ENCODE measurements at regions of chr12 and their contacts with region 1.

Region 1: DNA sequence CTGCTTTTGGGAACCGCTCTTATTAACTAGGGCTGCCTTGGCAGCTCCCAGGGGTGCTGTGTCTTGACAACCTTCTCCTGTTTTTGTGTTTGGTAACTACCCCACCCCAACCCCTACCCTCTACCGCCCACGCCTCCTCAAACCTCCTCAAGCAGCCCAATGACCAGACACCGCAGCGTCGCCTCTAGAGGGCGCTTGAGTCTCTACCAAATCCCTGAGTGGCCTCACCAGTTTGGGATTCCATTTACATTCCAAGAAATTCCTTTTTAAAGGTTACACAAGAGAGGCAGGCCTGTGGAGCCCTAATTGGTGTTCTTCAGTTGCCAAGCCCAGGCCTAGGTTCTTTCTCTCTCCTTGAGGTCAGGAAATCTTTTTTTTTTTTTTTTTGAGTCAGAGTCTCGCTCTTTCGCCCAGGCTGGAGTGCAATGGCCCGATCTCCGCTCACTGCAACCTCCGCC is 72.3 kb upstream of the USP44 start:
- DNase-seq: peak; percentile 78
- H3K4me3 ChIP-seq: no peak overlapping the region
- H3K4me3 Mint-ChIP-seq: no peak overlapping the region
- H3K27ac Mint-ChIP-seq: peak overlapping the region; percentile 53
- H3K4me1 ChIP-seq: peaks cover 13% of the 10 kb centered on the region; the same call in 1 of the 2 replicates
- H3K4me1 Mint-ChIP-seq: no peaks in the 10 kb centered on the region
- H3K27me3 ChIP-seq: no peaks in the 10 kb centered on the region
- H3K27me3 Mint-ChIP-seq: no peaks in the 10 kb centered on the region
- CTCF ChIP-seq: peak; percentile 61 to 76

Region 2: DNA sequence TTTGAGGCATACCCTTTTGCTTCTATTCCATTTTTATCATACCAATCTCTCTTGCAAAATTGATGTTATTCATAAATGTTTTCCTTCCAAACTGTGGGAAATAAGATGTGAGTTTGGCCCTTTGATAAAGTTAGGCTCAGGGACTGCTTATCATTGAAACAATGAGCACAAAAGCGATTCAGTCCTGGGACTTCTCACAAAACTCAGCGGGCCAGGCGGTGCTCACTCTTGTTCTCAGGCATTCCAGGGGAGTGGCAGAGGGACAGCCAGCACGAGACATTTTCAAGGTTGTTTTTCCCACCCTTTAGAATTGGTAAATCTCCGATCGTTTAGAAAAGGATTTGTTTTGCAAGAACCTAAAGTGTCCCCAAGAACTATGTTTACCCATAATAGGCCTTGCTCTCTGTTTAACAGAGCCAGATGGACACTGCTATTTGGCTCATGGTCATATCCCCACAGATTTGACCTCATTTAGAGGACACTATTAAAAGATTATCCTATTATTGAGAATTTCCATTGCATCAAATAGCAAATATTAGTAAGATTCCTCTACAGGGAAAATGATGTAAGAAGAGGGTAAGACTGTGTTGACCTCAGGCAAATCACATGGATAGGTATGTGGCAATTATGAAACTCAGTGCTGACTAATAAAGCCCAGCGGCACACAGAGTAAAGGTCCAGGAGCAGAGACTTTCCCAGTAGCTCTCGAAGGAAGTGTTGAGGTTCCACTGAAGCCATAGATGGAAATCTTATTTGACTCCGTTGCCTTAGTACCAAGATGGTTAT is 30.3 kb after region 1 on chr12:
- CTCF ChIA-PET with region 1: no interaction called
- POLR2A ChIA-PET with region 1: no interaction called
- intact Hi-C with region 1: loop called (anchors 2 kb)
- DNase-seq: peak; percentile 40 to 76
- H3K4me3 ChIP-seq: no peak overlapping the region
- H3K4me3 Mint-ChIP-seq: peak overlapping the region; percentile 10
- H3K27ac Mint-ChIP-seq: peak overlapping the region; percentile 23
- H3K4me1 ChIP-seq: peaks cover 15% of the 10 kb centered on the region
- H3K4me1 Mint-ChIP-seq: peaks cover 33% of the 10 kb centered on the region
- H3K27me3 ChIP-seq: no peaks in the 10 kb centered on the region
- H3K27me3 Mint-ChIP-seq: no peaks in the 10 kb centered on the region
- CTCF ChIP-seq: no peak

Region 3: GRCh38 chr12:95721350-95721749 is 97.7 kb after region 1 on chr12:
- CTCF ChIA-PET with region 1: interaction called, 5 read pairs
- POLR2A ChIA-PET with region 1: no interaction called
- intact Hi-C with region 1: loop called (anchors 1 kb)
- DNase-seq: peak in 1 of 2 experiments; percentile 34
- H3K4me3 ChIP-seq: no peak overlapping the region
- H3K4me3 Mint-ChIP-seq: no peak overlapping the region
- H3K27ac Mint-ChIP-seq: peak overlapping the region; percentile 39
- H3K4me1 ChIP-seq: peaks cover 50% of the 10 kb centered on the region
- H3K4me1 Mint-ChIP-seq: peaks cover 25% of the 10 kb centered on the region
- H3K27me3 ChIP-seq: no peaks in the 10 kb centered on the region
- H3K27me3 Mint-ChIP-seq: no peaks in the 10 kb centered on the region
- CTCF ChIP-seq: peak in 1 of 2 experiments; percentile 37

Measured in Caco-2 (cell line).